K562 (cell line): ENCODE measurements at regions of chr5 and their contacts with region 1.

Region 1: GRCh38 chr5:78799266-78800017 is 150.9 kb upstream of the LHFPL2 start:
- DNase-seq: no peak
- ATAC-seq: no peak
- H3K4me3 ChIP-seq: no peak overlapping the region
- H3K27ac ChIP-seq: no peak overlapping the region
- H3K4me1 ChIP-seq: no peaks in the 10 kb centered on the region; a peak in 2 of 5 replicates
- H3K27me3 ChIP-seq: peaks cover 8 to 16% of the 10 kb centered on the region in 2 experiments; a peak in 4 of 5 replicates
- CTCF ChIP-seq: peak in 1 of 3 experiments; percentile 12; a peak in 1 of 6 replicates
- EP300 ChIP-seq: no peak
- POLR2A ChIP-seq: no peak
- RAD21 ChIP-seq: no peak

Region 2: DNA sequence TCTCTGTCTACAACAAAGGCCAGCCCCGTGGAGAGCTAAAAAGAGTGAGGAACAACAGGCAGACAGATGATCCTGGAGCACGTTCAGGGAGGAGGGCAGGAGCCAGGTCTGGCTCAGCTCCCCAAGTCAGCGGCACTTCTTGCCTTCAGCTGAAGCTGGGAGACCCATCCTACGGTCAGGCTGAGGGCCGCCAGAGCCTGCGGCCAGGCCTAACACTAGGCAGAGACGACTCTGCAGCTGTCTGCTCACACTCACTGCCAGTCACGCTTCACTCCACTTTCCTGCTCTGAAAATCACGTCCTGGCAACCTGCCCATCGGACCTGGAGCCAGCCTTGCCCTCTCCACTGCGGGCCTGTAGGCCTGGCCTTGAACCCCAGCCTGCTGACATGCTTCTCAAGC is 10.0 kb after region 1 on chr5:
- CTCF ChIA-PET with region 1: no interaction called
- POLR2A ChIA-PET with region 1: interaction called, 10 read pairs
- in situ Hi-C with region 1: no loop called
- intact Hi-C with region 1: no loop called
- DNase-seq: no peak
- ATAC-seq: no peak
- H3K4me3 ChIP-seq: no peak overlapping the region
- H3K27ac ChIP-seq: no peak overlapping the region
- H3K4me1 ChIP-seq: peaks cover 0 to 2% of the 10 kb centered on the region in 2 experiments; a peak in 3 of 5 replicates
- H3K27me3 ChIP-seq: peaks cover 6 to 14% of the 10 kb centered on the region in 2 experiments
- CTCF ChIP-seq: no peak
- EP300 ChIP-seq: no peak
- POLR2A ChIP-seq: no peak
- RAD21 ChIP-seq: no peak